ENCODE measurements at regions of chr6 and their contacts with region 1.

Region 1: DNA sequence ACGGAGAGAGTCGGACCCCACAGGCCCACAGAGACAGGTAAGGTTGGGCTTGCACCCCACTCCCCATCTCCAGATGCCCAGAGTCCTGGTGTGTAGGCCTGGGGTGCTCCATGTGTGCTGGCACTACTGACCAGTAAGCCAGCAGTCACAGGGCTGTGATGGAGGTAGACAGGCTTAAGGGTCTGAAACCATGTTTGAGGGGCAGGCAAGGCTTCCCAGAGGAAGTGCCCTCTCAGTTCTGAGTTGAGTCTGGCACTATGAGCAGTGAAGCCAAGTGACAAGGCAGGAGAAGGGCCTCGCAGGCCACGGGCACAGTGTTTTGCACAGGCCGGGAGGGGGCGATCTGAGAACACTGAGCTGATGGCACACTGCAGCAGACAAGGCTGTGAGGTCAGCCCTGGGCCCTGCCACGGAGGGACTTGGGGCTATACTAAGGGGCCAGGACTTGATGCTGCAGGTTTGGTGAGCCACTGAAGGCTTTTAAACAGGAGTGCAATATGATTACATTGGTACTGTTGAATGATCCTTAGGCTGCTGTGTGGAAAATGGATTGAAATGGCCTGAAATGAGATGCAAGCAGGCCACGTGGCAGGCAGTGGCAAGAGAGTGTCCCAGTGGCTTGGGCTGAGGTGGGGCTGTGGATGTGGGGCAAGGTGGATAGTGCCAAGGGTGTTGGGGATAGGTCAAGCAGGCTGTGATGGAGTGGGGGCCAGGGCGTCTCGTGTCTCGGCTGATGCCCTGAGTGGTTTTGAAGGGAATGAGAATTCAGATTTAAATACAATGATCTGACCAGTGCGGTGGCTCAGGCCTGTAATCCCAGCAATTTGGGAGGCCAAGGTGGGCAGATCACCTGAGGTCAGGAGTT is 20.3 kb downstream of the TTBK1 start:
- DNase-seq: peak; percentile 83
- H3K4me3 ChIP-seq: no peak overlapping the region
- H3K27ac ChIP-seq: no peak overlapping the region
- H3K4me1 ChIP-seq: no peaks in the 10 kb centered on the region
- CTCF ChIP-seq: peak; percentile 94

Region 2: DNA sequence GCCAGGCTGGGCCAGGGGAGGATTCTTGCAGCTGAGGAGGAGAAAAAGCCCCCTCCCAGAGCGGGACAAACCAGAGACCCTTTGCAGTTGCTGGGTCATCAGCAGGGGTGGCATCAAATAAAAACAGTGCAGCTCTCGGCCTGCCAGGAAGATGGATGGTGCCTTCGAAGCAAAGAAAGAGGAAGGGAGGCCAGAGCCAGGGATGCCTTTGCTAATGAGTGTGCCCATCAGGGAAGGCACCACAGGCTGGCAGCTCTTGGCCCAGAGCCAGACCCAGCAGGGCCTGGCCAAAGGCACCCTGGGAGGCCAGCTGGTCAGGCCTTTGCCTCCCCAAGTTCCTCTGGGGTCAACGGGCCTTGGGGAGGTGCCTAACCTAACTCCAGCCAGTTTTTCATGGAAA is 132.2 kb after region 1 on chr6:
- CTCF ChIA-PET with region 1: no interaction called
- POLR2A ChIA-PET with region 1: interaction called, 8 read pairs
- intact Hi-C with region 1: loop called (anchors 1 kb)
- DNase-seq: no peak
- H3K4me3 ChIP-seq: no peak overlapping the region
- H3K27ac ChIP-seq: no peak overlapping the region
- H3K4me1 ChIP-seq: peaks cover 26% of the 10 kb centered on the region
- CTCF ChIP-seq: no peak